RWPE1 (cell line): ENCODE measurements at regions of chr16 and their contacts with region 1.

Region 1: DNA sequence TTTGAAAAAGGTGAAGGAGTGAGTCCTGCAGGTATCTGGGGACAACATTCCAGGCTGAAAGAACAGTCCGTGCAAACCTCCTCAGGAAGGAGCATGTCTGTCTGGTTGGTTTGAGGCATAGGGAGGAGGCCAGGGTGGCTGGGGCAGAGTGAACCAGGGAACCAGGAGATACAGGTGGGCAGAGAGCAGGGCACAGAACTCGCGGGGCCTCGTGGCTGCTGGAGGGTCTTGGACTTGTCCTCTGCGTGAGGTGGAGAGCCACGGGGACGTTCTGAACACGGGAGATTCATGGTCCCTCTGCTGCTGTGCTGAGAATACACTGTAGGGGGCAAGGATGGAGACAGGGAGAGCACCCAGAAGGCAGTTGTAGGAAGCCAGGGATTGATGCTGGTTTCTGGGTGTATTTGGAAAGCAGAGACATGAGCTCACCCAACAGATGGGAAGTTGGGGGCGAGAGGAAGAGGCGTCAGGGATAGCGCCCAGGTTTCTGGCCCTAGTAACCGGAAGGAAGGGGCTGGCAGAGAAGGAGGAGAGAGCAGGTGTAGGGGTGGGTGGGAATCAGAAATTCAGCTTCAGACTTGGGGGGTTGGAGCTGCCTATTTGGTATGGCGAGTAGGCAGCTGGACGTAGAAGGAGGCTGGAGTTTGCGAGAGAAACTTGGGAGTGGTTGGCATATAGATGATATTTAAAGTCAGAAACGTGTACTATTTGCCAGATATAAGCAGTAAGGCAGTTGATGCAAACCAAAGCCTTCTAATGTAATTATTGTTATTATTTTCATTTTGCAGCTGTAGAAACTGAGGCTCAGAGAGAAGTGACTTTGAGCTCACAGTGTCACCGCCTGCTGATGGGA is at the start of gene CCL17:
- DNase-seq: no peak
- H3K27ac ChIP-seq: no peak within 1 kb of the TSS
- CTCF ChIP-seq: no peak

Region 2: DNA sequence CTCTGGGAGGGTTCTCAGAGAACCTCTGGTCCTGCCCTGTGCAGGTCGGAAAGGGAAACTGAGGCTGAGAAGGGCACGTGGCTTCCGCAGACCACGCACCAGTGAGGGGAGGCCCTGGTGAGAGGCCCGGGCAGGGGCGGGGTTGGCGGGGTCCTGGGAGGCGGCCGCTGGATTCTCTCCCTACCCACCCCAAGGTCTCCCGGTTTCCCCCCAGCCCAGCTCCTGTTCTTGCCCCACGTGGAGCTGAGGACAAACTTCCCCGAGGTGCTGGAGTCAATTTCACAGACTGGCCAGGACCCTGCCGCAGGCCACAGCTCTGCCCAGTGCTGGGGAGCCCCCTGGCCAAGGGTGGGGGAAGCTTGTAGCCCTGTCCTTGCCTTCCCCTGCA is 11.9 kb after region 1 on chr16:
- CTCF ChIA-PET with region 1: interaction called, 10 read pairs
- POLR2A ChIA-PET with region 1: no interaction called
- DNase-seq: no peak
- H3K27ac ChIP-seq: no peak overlapping the region
- CTCF ChIP-seq: no peak